Motor neuron (in vitro differentiated cells): ENCODE measurements at regions of chr17 and their contacts with region 1.

Region 1: GRCh38 chr17:69523244-69523861 is 108.9 kb downstream of the MAP2K6 start:
- ATAC-seq: peak in 5 of 8 experiments; percentile 45 to 71 (median 65)
- H3K4me3 ChIP-seq: no peak overlapping the region
- H3K27ac ChIP-seq: no peak overlapping the region
- H3K4me1 ChIP-seq: no peaks in the 10 kb centered on the region

Region 2: GRCh38 chr17:69327060-69327831 is 196.1 kb before region 1 on chr17 and contains the start of gene ABCA5:
- in situ Hi-C with region 1: loop called in 3 of 9 experiments (anchors 10 to 25 kb)
- ATAC-seq: peak; percentile 90 to 97 (median 96)
- H3K4me3 ChIP-seq: peak within 1 kb of the TSS; percentile 51 to 67 (median 55)
- H3K27ac ChIP-seq: peak within 1 kb of the TSS; percentile 71 to 73
- H3K4me1 ChIP-seq: peaks cover 16% of the 10 kb centered on the region in 2 donors
- total RNA-seq, gene ABCA5: 7.3 to 60.2 (median 27.0) TPM

Region 3: GRCh38 chr17:69335058-69335457 is 188.3 kb before region 1 on chr17:
- in situ Hi-C with region 1: loop called in 3 of 9 experiments (anchors 10 to 25 kb)
- ATAC-seq: peak in 2 of 8 experiments; percentile 67 to 70
- H3K4me3 ChIP-seq: no peak overlapping the region
- H3K27ac ChIP-seq: no peak overlapping the region
- H3K4me1 ChIP-seq: no peaks in the 10 kb centered on the region

Region 4: DNA sequence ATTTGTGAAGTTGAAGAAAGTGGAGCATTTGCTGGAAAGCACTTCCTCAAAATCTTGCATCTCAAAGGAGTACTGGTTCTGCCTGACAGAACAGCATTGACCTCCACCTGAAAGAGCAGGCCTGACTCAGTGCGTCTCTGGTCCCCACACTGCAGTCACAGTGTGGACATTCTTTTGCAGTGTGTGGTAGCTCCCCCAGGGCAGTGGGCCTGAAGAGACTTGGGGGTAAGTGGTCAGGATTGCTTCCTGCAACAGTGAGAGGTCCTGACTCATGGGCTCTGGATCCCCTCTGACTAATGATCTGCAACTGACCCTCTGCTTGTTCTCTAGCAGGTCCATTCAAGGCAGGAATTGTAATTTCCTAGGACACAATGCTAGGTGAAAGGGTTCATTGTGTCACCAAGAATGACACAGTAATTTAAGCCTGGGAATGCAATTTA is 346.8 kb after region 1 on chr17:
- in situ Hi-C with region 1: no loop called
- ATAC-seq: peak in 2 of 8 experiments; percentile 21 to 43
- H3K4me3 ChIP-seq: no peak overlapping the region
- H3K27ac ChIP-seq: no peak overlapping the region
- H3K4me1 ChIP-seq: peaks cover 4 to 18% of the 10 kb centered on the region in 2 donors

Region 5: DNA sequence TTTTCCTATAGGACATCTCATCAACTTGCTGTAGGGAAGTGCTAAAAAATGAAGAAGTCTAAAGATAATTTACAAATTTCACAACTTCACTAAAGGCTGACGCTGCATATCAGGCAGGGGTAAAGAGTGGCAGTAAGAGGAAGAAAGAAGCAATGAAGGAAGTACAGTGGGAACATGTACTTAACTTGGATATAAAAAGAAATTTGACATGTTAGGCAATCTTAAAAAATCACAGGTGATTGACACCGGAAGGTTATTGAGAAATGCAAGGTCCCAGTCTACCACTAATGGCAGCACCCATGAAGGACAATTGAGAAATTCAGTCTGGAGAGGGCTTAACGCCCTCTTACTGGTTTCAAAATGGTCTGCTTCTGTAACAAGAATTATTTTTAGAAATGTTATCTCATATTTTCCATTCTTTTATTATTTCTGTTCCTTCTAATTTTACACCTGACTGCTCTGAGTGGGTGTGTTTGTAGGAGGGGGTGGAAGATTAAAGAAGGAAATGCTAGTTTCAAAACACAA is 1004.1 kb after region 1 on chr17:
- in situ Hi-C with region 1: loop called in 1 of 9 experiments (anchors 25 kb)
- ATAC-seq: no peak
- H3K4me3 ChIP-seq: no peak overlapping the region
- H3K27ac ChIP-seq: no peak overlapping the region
- H3K4me1 ChIP-seq: no peaks in the 10 kb centered on the region